Thyroid gland (tissue), 4 donors: ENCODE measurements at regions of chr2 and their contacts with region 1.

Region 1: DNA sequence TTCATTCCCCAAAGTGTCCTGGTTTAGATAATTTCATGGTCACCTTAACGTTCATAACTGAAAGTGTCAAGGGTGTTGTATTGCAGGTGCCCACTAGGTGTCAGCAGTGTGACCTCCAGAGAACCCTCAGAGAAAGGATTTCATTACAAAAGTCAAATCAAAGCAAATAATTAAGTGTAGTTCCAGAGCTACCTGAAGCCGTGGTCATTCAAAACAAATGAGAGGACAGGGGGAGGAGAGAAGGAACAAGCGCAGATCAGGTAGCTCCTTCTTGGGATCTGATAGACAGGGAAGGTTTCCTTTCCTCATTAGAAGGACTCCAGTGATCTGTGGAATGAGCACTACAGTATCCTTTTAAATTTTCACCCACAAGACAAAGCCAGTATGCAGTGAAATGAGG is at the start of gene SLC9A4:
- DNase-seq: peak; percentile 65 to 68
- H3K4me3 ChIP-seq: no peak within 1 kb of the TSS
- H3K27ac ChIP-seq: no peak within 1 kb of the TSS
- H3K4me1 ChIP-seq: no peaks in the 10 kb centered on the region
- H3K27me3 ChIP-seq: no peaks in the 10 kb centered on the region
- CTCF ChIP-seq: peak; percentile 52 to 90 (median 77)
- POLR2A ChIP-seq: no peak
- total RNA-seq, gene SLC9A4: not detected

Region 2: GRCh38 chr2:102558463-102558862 is 85.4 kb after region 1 on chr2:
- intact Hi-C with region 1: no loop called
- DNase-seq: no peak
- H3K4me3 ChIP-seq: no peak overlapping the region
- H3K27ac ChIP-seq: no peak overlapping the region
- H3K4me1 ChIP-seq: no peaks in the 10 kb centered on the region
- H3K27me3 ChIP-seq: no peaks in the 10 kb centered on the region
- CTCF ChIP-seq: no peak
- POLR2A ChIP-seq: no peak

Region 3: GRCh38 chr2:102615622-102616436 is 142.8 kb after region 1 on chr2:
- intact Hi-C with region 1: loop called (anchors 10 kb)
- DNase-seq: peak; percentile 56 to 68
- H3K4me3 ChIP-seq: no peak overlapping the region
- H3K27ac ChIP-seq: no peak overlapping the region
- H3K4me1 ChIP-seq: peaks cover 8 to 11% of the 10 kb centered on the region in 2 donors
- H3K27me3 ChIP-seq: no peaks in the 10 kb centered on the region
- CTCF ChIP-seq: peak in 5 of 6 experiments; percentile 49 to 85 (median 77)
- POLR2A ChIP-seq: no peak